K562 (cell line): ENCODE measurements at regions of chr15 and their contacts with region 1.

Region 1: DNA sequence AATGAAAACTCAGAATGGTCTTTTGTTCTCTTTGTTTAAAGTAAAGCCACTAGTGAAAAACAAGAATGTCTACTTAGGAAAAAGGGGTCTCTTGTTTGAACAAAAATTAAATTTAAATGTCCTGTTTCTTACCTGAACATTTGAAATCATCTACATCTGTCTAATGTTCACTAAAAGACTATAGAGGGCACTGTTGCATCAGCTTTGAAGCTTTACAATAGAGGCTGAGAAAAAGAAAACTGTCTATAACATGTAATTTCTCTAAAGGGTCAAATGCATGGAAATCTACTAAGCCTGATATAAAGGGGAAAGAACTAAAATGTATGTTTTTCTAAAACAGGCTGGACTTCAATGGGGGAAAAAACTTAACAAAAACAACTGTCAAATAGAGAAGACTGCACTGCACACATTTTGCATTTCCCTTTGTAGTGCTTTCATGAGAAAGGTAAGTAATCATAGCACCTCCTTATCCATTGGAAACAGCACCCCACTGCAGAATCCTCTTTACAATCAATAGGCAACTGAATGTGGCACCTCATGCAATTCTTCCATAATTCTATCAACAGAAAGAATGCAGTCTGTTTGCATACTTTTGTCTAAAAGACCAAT is 26.3 kb downstream of the DPH6 start:
- DNase-seq: peak in 3 of 4 experiments; percentile 10 to 61 (median 12)
- ATAC-seq: peak; percentile 86
- H3K4me3 ChIP-seq: no peak overlapping the region
- H3K27ac ChIP-seq: no peak overlapping the region
- H3K4me1 ChIP-seq: no peaks in the 10 kb centered on the region
- H3K27me3 ChIP-seq: no peaks in the 10 kb centered on the region
- CTCF ChIP-seq: peak; percentile 28 to 75 (median 40); a peak in 3 of 6 replicates
- EP300 ChIP-seq: no peak
- POLR2A ChIP-seq: no peak
- RAD21 ChIP-seq: peak; percentile 76 to 90

Region 2: GRCh38 chr15:35379972-35380371 is 139.7 kb before region 1 on chr15:
- CTCF ChIA-PET with region 1: no interaction called
- POLR2A ChIA-PET with region 1: no interaction called
- in situ Hi-C with region 1: no loop called
- intact Hi-C with region 1: no loop called
- DNase-seq: no peak
- ATAC-seq: no peak
- H3K4me3 ChIP-seq: no peak overlapping the region
- H3K27ac ChIP-seq: no peak overlapping the region
- H3K4me1 ChIP-seq: no peaks in the 10 kb centered on the region
- H3K27me3 ChIP-seq: no peaks in the 10 kb centered on the region
- CTCF ChIP-seq: no peak
- EP300 ChIP-seq: no peak
- POLR2A ChIP-seq: no peak
- RAD21 ChIP-seq: no peak

Region 3: DNA sequence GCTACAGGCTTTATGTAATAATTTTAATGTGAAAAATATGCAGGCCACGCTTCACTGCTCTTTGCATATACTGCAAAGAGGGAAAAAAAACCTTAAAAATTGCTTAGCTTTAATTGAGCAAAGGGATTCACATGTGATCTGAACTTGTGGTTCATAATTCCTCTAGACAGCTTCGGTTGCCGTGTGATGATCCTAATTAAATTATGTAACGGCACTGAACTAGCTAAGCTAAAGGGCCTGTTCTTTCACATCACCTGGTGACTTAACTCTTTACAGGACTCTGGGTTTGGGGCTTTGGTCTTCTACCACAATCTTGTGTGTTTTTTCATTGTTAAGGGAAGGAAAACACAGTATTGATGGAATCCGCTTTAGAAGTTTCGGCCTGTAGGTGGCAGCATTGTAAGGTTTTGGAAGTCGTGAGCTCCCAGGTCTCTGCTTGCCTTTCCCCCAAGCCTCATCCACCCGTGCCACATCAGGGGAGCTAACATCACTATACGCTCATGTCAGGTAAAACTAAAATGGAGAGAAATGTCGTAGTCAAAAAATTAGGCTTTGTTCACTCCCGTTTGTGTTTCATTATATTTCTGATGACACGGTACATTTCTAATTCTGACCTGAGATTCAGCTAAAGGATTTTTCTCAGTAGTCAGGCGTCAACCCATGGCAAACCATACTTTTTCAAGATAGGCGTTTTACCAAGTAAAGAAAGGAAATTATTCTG is 231.9 kb after region 1 on chr15:
- CTCF ChIA-PET with region 1: no interaction called
- POLR2A ChIA-PET with region 1: no interaction called
- in situ Hi-C with region 1: no loop called
- intact Hi-C with region 1: loop called (anchors 2 kb)
- DNase-seq: peak; percentile 53 to 79 (median 55)
- ATAC-seq: peak; percentile 93
- H3K4me3 ChIP-seq: no peak overlapping the region
- H3K27ac ChIP-seq: no peak overlapping the region
- H3K4me1 ChIP-seq: no peaks in the 10 kb centered on the region
- H3K27me3 ChIP-seq: no peaks in the 10 kb centered on the region
- CTCF ChIP-seq: peak; percentile 60 to 75 (median 68)
- EP300 ChIP-seq: no peak
- POLR2A ChIP-seq: no peak
- RAD21 ChIP-seq: peak; percentile 48 to 69

Region 4: GRCh38 chr15:36263666-36264065 is 744.0 kb after region 1 on chr15:
- CTCF ChIA-PET with region 1: no interaction called
- POLR2A ChIA-PET with region 1: no interaction called
- in situ Hi-C with region 1: no loop called
- intact Hi-C with region 1: loop called (anchors 10 kb)
- DNase-seq: no peak
- ATAC-seq: no peak
- H3K4me3 ChIP-seq: no peak overlapping the region
- H3K27ac ChIP-seq: no peak overlapping the region
- H3K4me1 ChIP-seq: no peaks in the 10 kb centered on the region
- H3K27me3 ChIP-seq: no peaks in the 10 kb centered on the region
- CTCF ChIP-seq: no peak
- EP300 ChIP-seq: no peak
- POLR2A ChIP-seq: no peak
- RAD21 ChIP-seq: no peak

Region 5: GRCh38 chr15:36334059-36334458 is 814.4 kb after region 1 on chr15:
- CTCF ChIA-PET with region 1: no interaction called
- POLR2A ChIA-PET with region 1: no interaction called
- in situ Hi-C with region 1: no loop called
- intact Hi-C with region 1: no loop called
- DNase-seq: peak in 2 of 4 experiments; percentile 55 to 58
- ATAC-seq: peak; percentile 87
- H3K4me3 ChIP-seq: no peak overlapping the region
- H3K27ac ChIP-seq: peak overlapping the region; percentile 53
- H3K4me1 ChIP-seq: peaks cover 0 to 10% of the 10 kb centered on the region in 2 experiments; a peak in 2 of 5 replicates
- H3K27me3 ChIP-seq: no peaks in the 10 kb centered on the region
- CTCF ChIP-seq: no peak
- EP300 ChIP-seq: peak; percentile 29; the same call in 1 of the 2 replicates
- POLR2A ChIP-seq: no peak
- RAD21 ChIP-seq: 0 out of 4 replicates have a peak, but pooled peaks of 1 of the 2 experiments have one; percentile 4

Region 6: GRCh38 chr15:36428102-36428845 is 908.6 kb after region 1 on chr15:
- CTCF ChIA-PET with region 1: no interaction called
- POLR2A ChIA-PET with region 1: no interaction called
- in situ Hi-C with region 1: loop called (anchors 10 kb)
- intact Hi-C with region 1: no loop called
- DNase-seq: peak; percentile 75 to 94 (median 82)
- ATAC-seq: peak; percentile 97
- H3K4me3 ChIP-seq: peak overlapping the region; percentile 12; the same call in 1 of the 2 replicates
- H3K27ac ChIP-seq: peak overlapping the region; percentile 82
- H3K4me1 ChIP-seq: peaks cover 13 to 47% of the 10 kb centered on the region in 2 experiments
- H3K27me3 ChIP-seq: no peaks in the 10 kb centered on the region
- CTCF ChIP-seq: no peak; a peak in 1 of 6 replicates
- EP300 ChIP-seq: peak; percentile 98
- POLR2A ChIP-seq: no peak
- RAD21 ChIP-seq: no peak; a peak in 1 of 4 replicates

Region 7: GRCh38 chr15:37134699-37135131 is 1615.1 kb after region 1 on chr15:
- CTCF ChIA-PET with region 1: interaction called, 6 read pairs
- POLR2A ChIA-PET with region 1: no interaction called
- in situ Hi-C with region 1: no loop called
- intact Hi-C with region 1: loop called (anchors 10 kb)
- DNase-seq: peak; percentile 50 to 78 (median 63)
- ATAC-seq: peak; percentile 92
- H3K4me3 ChIP-seq: no peak overlapping the region
- H3K27ac ChIP-seq: no peak overlapping the region
- H3K4me1 ChIP-seq: no peaks in the 10 kb centered on the region
- H3K27me3 ChIP-seq: no peaks in the 10 kb centered on the region; a peak in 1 of 5 replicates
- CTCF ChIP-seq: peak; percentile 44 to 88 (median 76); a peak in 5 of 6 replicates
- EP300 ChIP-seq: no peak
- POLR2A ChIP-seq: no peak
- RAD21 ChIP-seq: peak; percentile 43 to 56